ENCODE measurements at regions of chr6 and their contacts with region 1.

Region 1: GRCh38 chr6:44237813-44238433 is 9.0 kb upstream of the HSP90AB1 start:
- DNase-seq: peak; percentile 57
- H3K4me3 ChIP-seq: peak overlapping the region; percentile 30 to 67 (median 40)
- H3K27ac ChIP-seq: peak overlapping the region; percentile 50
- H3K4me1 ChIP-seq: peaks cover 52% of the 10 kb centered on the region
- H3K27me3 ChIP-seq: no peaks in the 10 kb centered on the region
- CTCF ChIP-seq: peak; percentile 62 to 96

Region 2: GRCh38 chr6:43516697-43517504 is 721.0 kb before region 1 on chr6 and contains the starts of genes POLR1C and YIPF3:
- CTCF ChIA-PET with region 1: no interaction called
- dilution Hi-C with region 1: loop called (anchors 10 kb)
- in situ Hi-C with region 1: no loop called
- intact Hi-C with region 1: no loop called
- DNase-seq: peak; percentile 97
- H3K4me3 ChIP-seq: peak within 1 kb of the TSS; percentile 76 to 98 (median 93)
- H3K27ac ChIP-seq: peak within 1 kb of the TSS; percentile 91
- H3K4me1 ChIP-seq: peaks cover 17% of the 10 kb centered on the region
- H3K27me3 ChIP-seq: no peaks in the 10 kb centered on the region
- CTCF ChIP-seq: no peak
- total RNA-seq, gene POLR1C: 28.2 to 50.5 TPM
- total RNA-seq, gene YIPF3: 71.2 to 83.8 TPM

Region 3: GRCh38 chr6:44096612-44097011 is 141.3 kb before region 1 on chr6:
- CTCF ChIA-PET with region 1: no interaction called
- dilution Hi-C with region 1: loop called (anchors 5 kb)
- in situ Hi-C with region 1: loop called in 1 of 2 experiments (anchors 25 kb)
- intact Hi-C with region 1: loop called (anchors 1 kb)
- DNase-seq: peak; percentile 61
- H3K4me3 ChIP-seq: no peak overlapping the region
- H3K27ac ChIP-seq: no peak overlapping the region
- H3K4me1 ChIP-seq: no peaks in the 10 kb centered on the region
- H3K27me3 ChIP-seq: no peaks in the 10 kb centered on the region
- CTCF ChIP-seq: peak; percentile 85 to 87

Region 4: DNA sequence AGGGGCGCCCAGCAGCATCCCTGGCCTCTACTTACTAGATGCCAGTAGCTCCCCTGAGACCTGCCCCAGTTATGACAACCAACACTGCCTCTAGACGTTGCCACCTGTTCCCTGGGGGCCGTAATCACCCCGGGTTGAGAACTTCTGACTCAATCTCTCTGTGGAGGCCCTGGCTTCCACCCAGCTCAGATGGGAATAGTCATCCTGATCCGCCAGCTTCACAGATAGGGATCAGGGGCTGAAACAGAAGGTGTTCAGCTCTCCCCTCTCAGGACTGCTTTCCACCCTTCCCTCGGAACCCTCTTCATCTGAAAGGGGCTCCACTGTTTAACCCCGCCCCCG is 76.0 kb before region 1 on chr6:
- CTCF ChIA-PET with region 1: no interaction called
- dilution Hi-C with region 1: no loop called
- in situ Hi-C with region 1: loop called in 1 of 2 experiments (anchors 10 kb)
- intact Hi-C with region 1: no loop called
- DNase-seq: peak; percentile 68
- H3K4me3 ChIP-seq: no peak overlapping the region
- H3K27ac ChIP-seq: no peak overlapping the region
- H3K4me1 ChIP-seq: no peaks in the 10 kb centered on the region
- H3K27me3 ChIP-seq: no peaks in the 10 kb centered on the region
- CTCF ChIP-seq: no peak

Region 5: GRCh38 chr6:44185953-44186634 is 51.8 kb before region 1 on chr6:
- CTCF ChIA-PET with region 1: no interaction called
- dilution Hi-C with region 1: loop called (anchors 10 kb)
- in situ Hi-C with region 1: no loop called
- intact Hi-C with region 1: no loop called
- DNase-seq: no peak
- H3K4me3 ChIP-seq: no peak overlapping the region
- H3K27ac ChIP-seq: no peak overlapping the region
- H3K4me1 ChIP-seq: no peaks in the 10 kb centered on the region
- H3K27me3 ChIP-seq: no peaks in the 10 kb centered on the region
- CTCF ChIP-seq: no peak

Region 6: DNA sequence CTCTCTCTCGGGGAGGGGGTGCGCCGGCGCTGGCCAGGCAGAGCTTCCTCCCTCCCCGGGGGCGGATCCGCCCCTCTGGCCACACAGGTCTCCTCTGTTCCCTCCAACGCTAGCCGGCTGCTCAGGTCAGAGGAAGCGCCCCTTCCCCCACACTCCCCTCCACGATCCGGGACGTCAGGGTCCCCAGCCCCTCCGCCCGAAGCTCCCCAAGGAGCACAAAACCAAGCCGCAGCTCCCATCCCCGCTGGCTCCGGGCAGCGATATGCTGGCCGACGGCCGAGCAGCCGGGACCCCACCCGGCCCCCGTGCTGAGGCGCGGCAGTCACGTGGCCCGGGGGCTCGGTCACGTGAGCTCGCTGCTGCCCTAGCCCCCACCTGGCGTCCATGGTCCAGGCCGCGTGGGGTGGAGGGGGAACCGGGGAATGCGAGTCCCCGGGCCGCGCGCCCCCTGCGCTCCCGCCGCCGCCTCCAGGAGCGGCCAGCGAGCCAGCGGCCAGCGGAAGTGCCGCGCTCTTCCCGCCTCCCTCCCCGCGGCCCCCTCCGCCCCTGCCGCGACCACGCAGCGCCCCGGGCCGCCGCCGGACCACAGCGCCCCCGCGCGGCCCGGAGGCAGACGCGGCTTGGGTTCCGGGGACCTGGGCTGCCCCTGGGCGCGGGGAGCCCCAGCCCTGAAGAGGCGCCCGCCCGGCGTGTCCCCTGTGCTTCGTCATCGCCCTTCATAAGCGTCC is 19.3 kb after region 1 on chr6 and contains the start of gene SLC35B2:
- CTCF ChIA-PET with region 1: no interaction called
- dilution Hi-C with region 1: no loop called
- in situ Hi-C with region 1: no loop called
- intact Hi-C with region 1: loop called (anchors 1 kb)
- DNase-seq: peak; percentile 65
- H3K4me3 ChIP-seq: peak within 1 kb of the TSS; percentile 85 to 90 (median 87)
- H3K27ac ChIP-seq: peak within 1 kb of the TSS; percentile 69
- H3K4me1 ChIP-seq: peaks cover 8% of the 10 kb centered on the region
- H3K27me3 ChIP-seq: no peaks in the 10 kb centered on the region
- CTCF ChIP-seq: peak; percentile 36 to 53
- total RNA-seq, gene SLC35B2: 72.6 to 76.3 TPM

Measured in mammary epithelial cell (primary cell).